IMR-90 (cell line): ENCODE measurements at regions of chr15 and their contacts with region 1.

Region 1: DNA sequence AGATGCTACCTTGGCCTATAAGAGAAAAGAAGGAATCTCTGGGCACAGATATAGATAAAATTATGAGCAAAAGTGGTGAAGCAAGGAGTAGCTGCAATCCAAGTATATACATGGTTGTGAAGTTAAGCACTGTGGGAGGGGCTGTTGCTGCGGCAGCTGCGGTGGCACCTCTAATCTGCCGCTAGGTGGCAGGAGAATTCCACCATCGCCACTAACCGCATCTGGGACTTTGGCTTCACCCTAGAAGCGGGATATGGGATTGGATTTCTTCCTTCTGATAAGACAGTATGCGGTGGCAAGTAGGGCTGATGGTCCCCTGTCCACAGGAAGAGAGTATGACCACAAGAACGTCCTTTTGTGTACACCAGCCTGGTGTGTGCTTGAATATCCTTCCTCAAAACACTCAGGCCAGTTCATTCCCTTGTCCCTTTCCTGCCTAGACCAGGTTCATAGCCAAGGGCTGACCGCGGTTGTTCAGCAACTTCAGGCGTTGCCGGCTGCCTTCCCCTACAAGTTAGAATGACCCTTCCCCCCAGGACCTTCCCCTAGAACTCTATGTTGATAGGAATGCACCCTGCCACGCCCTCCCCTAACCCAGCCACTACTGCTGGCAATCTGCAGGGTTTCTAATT is 5.1 kb downstream of the MAGEL2 start:
- DNase-seq: peak; percentile 51
- ATAC-seq: peak; percentile 94
- H3K4me3 ChIP-seq: no peak overlapping the region
- H3K27ac ChIP-seq: no peak overlapping the region
- H3K4me1 ChIP-seq: no peaks in the 10 kb centered on the region
- H3K27me3 ChIP-seq: no peaks in the 10 kb centered on the region
- CTCF ChIP-seq: peak; percentile 81
- POLR2A ChIP-seq: no peak
- RAD21 ChIP-seq: peak; percentile 80

Region 2: GRCh38 chr15:23787346-23788105 is 145.0 kb after region 1 on chr15:
- CTCF ChIA-PET with region 1: no interaction called
- POLR2A ChIA-PET with region 1: no interaction called
- dilution Hi-C with region 1: no loop called
- in situ Hi-C with region 1: no loop called
- intact Hi-C with region 1: no loop called
- DNase-seq: no peak
- ATAC-seq: no peak
- H3K4me3 ChIP-seq: no peak overlapping the region
- H3K27ac ChIP-seq: no peak overlapping the region
- H3K4me1 ChIP-seq: no peaks in the 10 kb centered on the region
- H3K27me3 ChIP-seq: no peaks in the 10 kb centered on the region
- CTCF ChIP-seq: no peak
- POLR2A ChIP-seq: no peak
- RAD21 ChIP-seq: no peak

Region 3: DNA sequence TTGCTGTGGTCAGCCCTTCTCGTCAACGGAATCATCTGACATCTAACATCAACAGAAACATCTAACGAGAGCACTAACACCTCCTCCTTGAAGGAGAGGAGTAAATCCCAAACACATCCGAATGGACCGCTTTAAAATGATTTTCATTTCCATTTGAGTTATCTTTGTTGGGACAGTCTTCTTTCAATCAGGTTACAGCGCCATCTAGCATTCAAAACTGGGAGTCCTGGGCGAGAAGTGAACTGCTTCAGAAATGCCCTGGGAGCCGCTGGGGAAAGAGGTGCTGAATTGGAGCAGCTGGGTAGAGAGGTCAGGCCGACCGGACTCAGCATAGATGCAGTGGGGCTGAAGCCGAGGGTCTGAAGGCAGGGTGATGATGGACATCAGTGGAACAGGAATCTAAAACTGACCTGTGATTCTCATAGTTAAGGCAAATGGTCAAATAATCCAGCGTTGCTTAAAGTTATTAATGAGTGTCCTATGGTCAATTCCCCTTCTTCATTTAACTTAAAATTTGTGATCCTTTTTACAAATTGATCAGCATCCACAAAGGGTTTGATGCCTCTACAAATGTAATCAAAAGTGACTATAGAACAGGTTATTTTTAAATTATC is 214.6 kb after region 1 on chr15:
- CTCF ChIA-PET with region 1: no interaction called
- POLR2A ChIA-PET with region 1: no interaction called
- dilution Hi-C with region 1: no loop called
- in situ Hi-C with region 1: loop called (anchors 10 kb)
- intact Hi-C with region 1: loop called (anchors 1 kb)
- DNase-seq: peak; percentile 22
- ATAC-seq: 0 out of 2 replicates have a peak, but pooled peaks have one; percentile 29
- H3K4me3 ChIP-seq: no peak overlapping the region
- H3K27ac ChIP-seq: no peak overlapping the region
- H3K4me1 ChIP-seq: no peaks in the 10 kb centered on the region
- H3K27me3 ChIP-seq: no peaks in the 10 kb centered on the region
- CTCF ChIP-seq: peak; percentile 53
- POLR2A ChIP-seq: no peak
- RAD21 ChIP-seq: peak; percentile 37

Region 4: DNA sequence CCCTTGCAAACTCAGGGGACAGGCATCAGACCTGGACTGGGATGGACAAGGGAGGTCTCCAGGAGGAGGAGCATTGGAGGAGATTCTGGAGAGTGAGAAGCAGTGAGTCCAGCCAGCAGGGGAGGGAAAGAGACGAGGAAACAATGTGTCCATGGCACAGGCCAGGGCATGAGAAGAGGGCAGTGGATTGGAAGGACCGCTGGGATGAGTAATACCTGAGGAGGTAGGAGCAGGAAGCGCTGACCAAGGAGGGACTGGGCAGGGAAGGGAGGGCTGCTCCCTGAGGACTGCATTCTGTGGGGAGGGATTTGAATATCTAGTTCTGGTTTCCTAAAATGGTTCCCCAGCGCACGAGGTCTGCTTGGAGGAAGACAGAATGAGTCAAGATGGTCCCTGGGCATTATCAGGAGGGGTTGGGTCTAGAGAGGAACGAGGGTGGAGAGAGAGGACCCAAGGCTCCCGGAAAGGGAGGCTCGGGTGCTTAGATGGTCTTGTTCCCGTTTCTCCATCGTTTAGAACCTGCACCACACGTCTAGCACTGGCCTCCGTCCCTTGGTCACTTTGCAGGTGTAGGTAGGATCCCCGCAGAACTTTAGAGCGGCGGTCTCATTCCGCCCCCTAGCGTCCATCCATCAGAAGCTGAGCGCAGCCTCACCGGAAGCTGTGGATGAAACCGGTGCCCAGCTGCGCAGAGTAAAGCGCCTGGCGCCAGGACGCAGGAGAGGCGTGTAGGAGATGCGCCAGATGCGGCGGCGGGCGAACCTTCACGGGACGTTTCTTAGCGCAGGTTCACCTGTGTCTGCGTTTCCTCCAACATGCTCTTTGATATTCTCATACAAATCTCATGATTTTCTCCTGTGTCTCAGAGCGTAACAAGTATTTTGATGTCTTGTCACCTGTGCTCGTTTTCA is 235.2 kb after region 1 on chr15:
- CTCF ChIA-PET with region 1: no interaction called
- POLR2A ChIA-PET with region 1: no interaction called
- dilution Hi-C with region 1: no loop called
- in situ Hi-C with region 1: no loop called
- intact Hi-C with region 1: loop called (anchors 1 kb)
- DNase-seq: no peak
- ATAC-seq: peak; percentile 27; the same call in 1 of the 2 replicates
- H3K4me3 ChIP-seq: no peak overlapping the region
- H3K27ac ChIP-seq: no peak overlapping the region
- H3K4me1 ChIP-seq: no peaks in the 10 kb centered on the region
- H3K27me3 ChIP-seq: no peaks in the 10 kb centered on the region
- CTCF ChIP-seq: peak; percentile 40
- POLR2A ChIP-seq: no peak
- RAD21 ChIP-seq: peak; percentile 32; the same call in 1 of the 2 replicates

Region 5: DNA sequence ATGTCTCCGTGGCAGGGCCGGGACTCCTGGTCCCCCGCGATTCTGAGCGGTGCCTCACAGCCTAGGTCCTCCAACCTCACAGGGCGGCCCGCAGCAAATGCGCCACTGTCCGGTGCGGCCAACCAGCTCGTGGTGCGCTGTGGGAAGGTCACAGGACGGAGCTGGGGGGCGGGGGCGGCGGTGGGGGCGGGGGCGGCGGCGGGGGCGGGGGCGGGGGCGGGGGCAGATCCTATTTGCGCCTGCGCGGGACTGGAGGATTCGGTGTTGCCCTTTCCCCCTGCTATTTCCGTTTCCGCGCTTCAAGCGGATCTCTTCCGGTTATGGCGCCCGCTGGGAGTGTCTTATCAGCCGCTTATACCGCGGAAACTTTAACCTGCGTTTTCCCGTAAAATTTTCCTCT is 1205.5 kb after region 1 on chr15:
- CTCF ChIA-PET with region 1: no interaction called
- POLR2A ChIA-PET with region 1: no interaction called
- dilution Hi-C with region 1: no loop called
- in situ Hi-C with region 1: no loop called
- intact Hi-C with region 1: loop called (anchors 10 kb)
- DNase-seq: peak; percentile 57
- ATAC-seq: peak; percentile 66
- H3K4me3 ChIP-seq: peak overlapping the region; percentile 62
- H3K27ac ChIP-seq: peak overlapping the region; percentile 58; the same call in 1 of the 2 replicates
- H3K4me1 ChIP-seq: no peaks in the 10 kb centered on the region
- H3K27me3 ChIP-seq: no peaks in the 10 kb centered on the region
- CTCF ChIP-seq: no peak
- POLR2A ChIP-seq: no peak
- RAD21 ChIP-seq: no peak